ENCODE measurements at regions of chr3 and their contacts with region 1.

Region 1: GRCh38 chr3:114152519-114153151 is 26.2 kb downstream of the DRD3 start:
- DNase-seq: peak; percentile 83
- H3K4me3 ChIP-seq: peak overlapping the region in 2 of 3 experiments; percentile 9 to 31
- H3K27ac ChIP-seq: no peak overlapping the region
- H3K4me1 ChIP-seq: peaks cover 4% of the 10 kb centered on the region
- H3K27me3 ChIP-seq: no peaks in the 10 kb centered on the region
- CTCF ChIP-seq: peak; percentile 89 to 91
- POLR2A ChIP-seq: no peak

Region 2: GRCh38 chr3:113838631-113839209 is 313.9 kb before region 1 on chr3 and contains the start of gene GRAMD1C:
- CTCF ChIA-PET with region 1: interaction called, 113 read pairs
- POLR2A ChIA-PET with region 1: no interaction called
- dilution Hi-C with region 1: no loop called
- intact Hi-C with region 1: loop called (anchors 1 kb)
- DNase-seq: peak; percentile 91
- H3K4me3 ChIP-seq: peak within 1 kb of the TSS; percentile 67 to 80 (median 69)
- H3K27ac ChIP-seq: peak within 1 kb of the TSS; percentile 83
- H3K4me1 ChIP-seq: no peaks in the 10 kb centered on the region
- H3K27me3 ChIP-seq: no peaks in the 10 kb centered on the region
- CTCF ChIP-seq: peak; percentile 85 to 93
- POLR2A ChIP-seq: peak; percentile 61
- total RNA-seq, gene GRAMD1C: 17.0 and 24.0 TPM in 2 replicates

Region 3: DNA sequence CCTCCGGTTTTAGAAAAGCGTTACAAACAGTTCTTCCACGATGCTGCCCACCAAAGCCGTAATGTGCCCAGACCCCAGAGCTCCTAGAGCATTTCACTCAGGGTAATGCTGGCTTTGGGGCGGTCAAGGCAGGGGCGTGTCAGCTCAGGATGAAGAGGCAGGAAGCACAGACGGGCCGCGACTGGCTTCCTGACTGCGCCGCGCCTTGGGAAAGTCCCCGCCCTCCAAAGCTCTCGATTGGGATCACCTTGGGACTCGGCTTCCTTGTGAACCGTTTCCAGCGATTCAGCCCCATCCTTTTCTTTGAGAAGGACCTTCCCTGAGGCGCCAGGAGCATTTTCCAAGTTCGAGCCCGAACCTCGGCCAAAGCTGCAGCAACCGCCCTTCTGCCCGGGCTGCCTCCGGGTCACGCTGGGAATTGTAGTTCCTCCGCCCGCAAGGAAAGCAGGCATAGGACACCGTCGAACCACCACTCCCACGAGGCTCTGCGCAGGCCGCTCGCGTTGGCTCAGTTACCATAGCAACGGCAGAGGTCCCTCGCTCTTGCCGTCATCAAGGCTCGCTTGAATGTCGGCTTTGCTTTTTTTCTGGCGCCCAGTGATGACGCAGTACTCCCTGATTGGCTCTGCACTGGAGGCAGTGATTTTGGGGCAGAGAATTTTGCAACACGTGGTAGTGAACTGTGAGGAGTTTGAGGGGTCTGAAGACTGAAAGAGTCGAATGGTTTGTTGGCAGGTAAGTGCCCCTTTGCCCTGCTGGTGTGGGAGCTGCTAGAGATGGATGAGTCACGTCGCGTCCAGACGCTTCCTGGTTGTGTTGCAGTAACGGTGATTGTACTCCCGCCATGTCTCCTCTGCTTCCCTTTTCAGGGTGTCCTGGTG is 96.3 kb before region 1 on chr3 and contains the starts of genes CCDC191 and QTRT2:
- CTCF ChIA-PET with region 1: interaction called, 14 read pairs
- POLR2A ChIA-PET with region 1: no interaction called
- dilution Hi-C with region 1: no loop called
- intact Hi-C with region 1: loop called (anchors 1 kb)
- DNase-seq: peak; percentile 99
- H3K4me3 ChIP-seq: peak within 1 kb of the TSS; percentile 50 to 88 (median 86)
- H3K27ac ChIP-seq: peak within 1 kb of the TSS; percentile 31
- H3K4me1 ChIP-seq: peaks cover 16% of the 10 kb centered on the region
- H3K27me3 ChIP-seq: no peaks in the 10 kb centered on the region
- CTCF ChIP-seq: no peak
- POLR2A ChIP-seq: peak; percentile 55
- total RNA-seq, gene CCDC191: 3.8 and 4.9 TPM in 2 replicates
- total RNA-seq, gene QTRT2: 29.5 and 42.8 TPM in 2 replicates

Region 4: GRCh38 chr3:114122027-114122709 is 30.5 kb before region 1 on chr3:
- CTCF ChIA-PET with region 1: interaction called, 13 read pairs
- POLR2A ChIA-PET with region 1: no interaction called
- dilution Hi-C with region 1: no loop called
- intact Hi-C with region 1: loop called (anchors 2 kb)
- DNase-seq: peak; percentile 92
- H3K4me3 ChIP-seq: peak overlapping the region in 1 of 3 experiments; percentile 3
- H3K27ac ChIP-seq: peak overlapping the region; percentile 66
- H3K4me1 ChIP-seq: peaks cover 20% of the 10 kb centered on the region
- H3K27me3 ChIP-seq: no peaks in the 10 kb centered on the region
- CTCF ChIP-seq: no peak
- POLR2A ChIP-seq: no peak

Region 5: DNA sequence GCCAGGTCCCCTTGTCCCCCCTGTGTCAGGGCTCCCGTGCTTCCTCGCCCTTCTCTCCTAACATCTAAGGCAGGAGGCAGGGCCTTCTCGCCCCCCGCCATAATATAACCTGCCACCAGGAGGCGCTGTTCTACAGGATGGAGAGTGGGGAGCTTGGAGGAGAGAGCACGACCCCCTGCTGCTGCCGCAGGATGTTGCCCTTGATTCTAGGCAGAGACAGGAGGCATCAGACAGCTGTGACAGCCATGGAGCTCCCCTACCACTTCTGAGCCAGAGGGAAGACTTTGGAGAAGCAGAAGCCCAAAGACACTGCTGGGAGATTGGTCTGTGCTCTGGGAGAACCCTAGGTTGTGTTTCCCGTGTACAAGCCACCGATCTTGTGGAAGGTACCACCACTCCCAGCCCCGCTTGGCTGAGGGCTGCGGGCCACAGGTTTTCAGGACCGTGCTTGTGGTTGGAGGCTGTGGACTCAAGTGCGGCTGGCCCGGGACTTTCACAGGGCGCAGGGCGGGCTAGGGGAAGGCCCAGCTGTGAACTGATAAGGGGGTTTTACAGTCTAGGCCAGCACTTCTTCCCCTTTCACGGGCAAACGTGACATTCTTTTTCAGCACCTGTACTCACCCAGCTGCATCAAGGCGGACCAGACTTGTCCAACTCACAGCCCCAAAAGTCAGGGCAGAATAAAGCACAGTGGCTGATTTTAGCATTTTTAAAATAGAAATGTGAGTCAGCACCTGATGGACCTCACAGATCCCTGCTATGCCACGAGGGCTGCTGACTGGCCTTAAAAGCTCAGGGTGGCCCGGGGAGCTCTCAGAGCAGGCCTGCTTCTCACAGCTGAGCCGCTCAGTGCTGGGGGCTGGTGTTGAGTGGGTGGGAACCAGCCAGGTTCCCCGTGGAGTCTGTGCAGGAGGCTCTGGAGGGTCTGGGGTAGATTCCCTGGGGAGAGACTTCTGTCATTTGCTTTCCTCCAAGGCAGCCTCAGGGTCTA is 138.6 kb after region 1 on chr3:
- CTCF ChIA-PET with region 1: interaction called, 24 read pairs
- POLR2A ChIA-PET with region 1: no interaction called
- dilution Hi-C with region 1: no loop called
- intact Hi-C with region 1: no loop called
- DNase-seq: peak; percentile 50
- H3K4me3 ChIP-seq: no peak overlapping the region
- H3K27ac ChIP-seq: no peak overlapping the region
- H3K4me1 ChIP-seq: no peaks in the 10 kb centered on the region
- H3K27me3 ChIP-seq: peaks cover 2% of the 10 kb centered on the region in 2 experiments
- CTCF ChIP-seq: peak; percentile 76 to 80
- POLR2A ChIP-seq: no peak

Region 6: DNA sequence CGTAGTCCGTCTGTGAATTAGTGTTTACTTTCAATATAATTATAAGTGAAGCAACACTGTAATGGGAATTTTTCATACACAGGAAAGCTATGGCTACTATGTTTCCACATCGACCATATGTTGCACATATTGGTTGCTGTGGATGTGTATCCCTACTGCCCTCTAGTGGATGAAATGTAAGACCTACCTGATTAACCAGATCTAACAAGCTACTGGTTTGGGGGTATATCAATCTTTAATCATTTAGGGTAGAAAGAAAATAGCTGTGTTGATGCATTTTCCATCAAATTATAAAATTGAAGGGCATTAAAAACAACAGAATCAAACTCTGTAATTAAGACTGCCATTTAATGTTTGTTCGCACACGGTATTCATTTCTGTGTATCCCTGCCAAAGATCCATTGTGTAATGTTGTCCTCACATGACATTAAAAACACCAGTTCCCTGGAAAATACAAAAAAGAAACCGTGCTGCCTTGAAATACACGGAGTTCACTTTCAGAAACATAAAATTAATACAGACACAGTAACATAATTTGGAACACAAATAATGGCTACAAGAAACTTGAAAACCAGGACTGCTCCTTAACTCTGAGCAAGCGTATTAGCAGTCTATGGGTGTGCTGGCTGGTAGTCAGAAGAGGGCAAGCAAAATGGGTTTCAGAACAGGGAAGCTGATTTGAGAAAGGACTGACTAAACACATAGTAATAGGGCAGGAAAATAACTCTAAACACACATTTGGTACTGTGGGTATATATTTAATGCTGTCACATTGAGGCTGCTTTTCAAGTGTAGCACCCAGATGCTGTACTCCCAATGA is 266.3 kb after region 1 on chr3:
- CTCF ChIA-PET with region 1: interaction called, 14 read pairs
- POLR2A ChIA-PET with region 1: no interaction called
- dilution Hi-C with region 1: no loop called
- intact Hi-C with region 1: loop called (anchors 1 kb)
- DNase-seq: peak; percentile 78
- H3K4me3 ChIP-seq: no peak overlapping the region
- H3K27ac ChIP-seq: no peak overlapping the region
- H3K4me1 ChIP-seq: no peaks in the 10 kb centered on the region
- H3K27me3 ChIP-seq: no peaks in the 10 kb centered on the region
- CTCF ChIP-seq: peak; percentile 55 to 61
- POLR2A ChIP-seq: no peak

Region 7: GRCh38 chr3:114627770-114628169 is 475.1 kb after region 1 on chr3:
- CTCF ChIA-PET with region 1: no interaction called
- POLR2A ChIA-PET with region 1: no interaction called
- dilution Hi-C with region 1: no loop called
- intact Hi-C with region 1: no loop called
- DNase-seq: no peak
- H3K4me3 ChIP-seq: no peak overlapping the region
- H3K27ac ChIP-seq: no peak overlapping the region
- H3K4me1 ChIP-seq: peaks cover 29% of the 10 kb centered on the region
- H3K27me3 ChIP-seq: no peaks in the 10 kb centered on the region
- CTCF ChIP-seq: no peak
- POLR2A ChIP-seq: no peak